Mammary epithelial cell (primary cell): ENCODE measurements at regions of chr5 and their contacts with region 1.

Region 1: DNA sequence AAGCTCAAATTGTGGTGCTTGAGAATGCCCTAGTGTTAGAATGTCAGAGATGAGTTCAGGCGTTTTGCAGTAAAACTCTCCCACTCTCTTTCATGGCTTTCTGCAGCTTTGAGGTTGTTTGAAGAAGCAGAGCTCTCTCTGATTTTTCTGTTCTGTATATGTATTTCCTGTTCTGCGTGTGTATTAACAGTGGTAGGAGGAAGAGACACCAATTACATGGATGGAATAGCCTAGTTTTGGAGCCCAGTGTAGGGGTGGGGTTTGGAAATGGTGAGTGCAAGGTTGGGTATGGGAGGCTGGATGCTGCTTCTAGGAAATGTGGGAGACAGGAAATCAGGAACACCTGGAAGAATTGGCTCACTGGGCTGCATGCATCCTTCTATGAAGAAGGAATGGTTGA is 12.4 kb downstream of the LARP1 start:
- DNase-seq: no peak
- H3K4me3 ChIP-seq: no peak overlapping the region
- H3K27ac ChIP-seq: no peak overlapping the region
- H3K4me1 ChIP-seq: peaks cover 16% of the 10 kb centered on the region
- H3K27me3 ChIP-seq: no peaks in the 10 kb centered on the region
- CTCF ChIP-seq: no peak

Region 2: DNA sequence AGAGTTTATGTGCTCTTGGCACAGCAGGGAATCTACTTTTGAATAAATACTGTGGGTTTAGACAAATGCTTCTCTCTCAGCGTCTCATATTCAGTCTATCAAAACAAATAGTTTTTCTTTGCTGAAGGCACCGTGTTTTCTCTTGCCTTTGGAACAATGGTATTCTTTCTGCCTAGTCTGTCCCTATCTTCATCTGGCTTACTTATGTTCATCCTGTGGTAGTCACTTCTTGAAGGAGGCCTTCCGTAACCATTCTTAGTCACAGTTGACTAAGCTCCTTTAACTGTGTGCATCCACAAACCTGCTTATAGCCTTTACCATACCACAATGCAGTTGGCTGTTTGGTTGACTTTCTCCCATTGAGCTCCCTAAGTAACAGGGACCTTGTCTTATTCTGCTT is 33.5 kb after region 1 on chr5:
- CTCF ChIA-PET with region 1: no interaction called
- dilution Hi-C with region 1: loop called (anchors 5 kb)
- in situ Hi-C with region 1: no loop called
- intact Hi-C with region 1: no loop called
- DNase-seq: peak; percentile 13
- H3K4me3 ChIP-seq: no peak overlapping the region
- H3K27ac ChIP-seq: no peak overlapping the region
- H3K4me1 ChIP-seq: no peaks in the 10 kb centered on the region
- H3K27me3 ChIP-seq: no peaks in the 10 kb centered on the region
- CTCF ChIP-seq: no peak

Region 3: DNA sequence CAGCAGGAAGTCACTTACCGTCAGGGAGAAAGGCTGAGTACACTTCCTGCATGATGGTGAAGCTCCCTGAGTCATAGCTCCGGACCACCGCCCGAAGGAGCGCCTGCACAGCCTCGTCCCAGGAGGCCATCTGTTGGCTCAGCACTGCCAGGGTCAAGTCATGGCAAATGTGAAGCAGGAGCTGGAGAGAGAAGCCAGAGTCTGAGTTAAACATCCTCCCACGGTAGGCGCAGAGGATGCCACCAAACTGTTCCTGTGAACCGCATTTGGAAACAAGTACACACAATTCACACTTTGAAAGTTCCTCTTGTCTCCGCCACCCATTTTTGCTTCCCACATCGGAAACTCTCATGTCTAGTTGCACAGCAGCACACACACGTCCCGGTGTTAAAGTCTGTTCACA is 124.8 kb after region 1 on chr5:
- CTCF ChIA-PET with region 1: no interaction called
- dilution Hi-C with region 1: no loop called
- in situ Hi-C with region 1: no loop called
- intact Hi-C with region 1: no loop called
- DNase-seq: no peak
- H3K4me3 ChIP-seq: no peak overlapping the region
- H3K27ac ChIP-seq: no peak overlapping the region
- H3K4me1 ChIP-seq: no peaks in the 10 kb centered on the region
- H3K27me3 ChIP-seq: no peaks in the 10 kb centered on the region
- CTCF ChIP-seq: no peak